Activated naive CD4-positive, alpha-beta T cell treated with anti-CD3 and anti-CD28 coated beads, Interleukin-2, amount 10 ng/mL, durations not matched to agents 7 days and 5 days (primary cell): ENCODE measurements at regions of chr13 and their contacts with region 1.

Region 1: DNA sequence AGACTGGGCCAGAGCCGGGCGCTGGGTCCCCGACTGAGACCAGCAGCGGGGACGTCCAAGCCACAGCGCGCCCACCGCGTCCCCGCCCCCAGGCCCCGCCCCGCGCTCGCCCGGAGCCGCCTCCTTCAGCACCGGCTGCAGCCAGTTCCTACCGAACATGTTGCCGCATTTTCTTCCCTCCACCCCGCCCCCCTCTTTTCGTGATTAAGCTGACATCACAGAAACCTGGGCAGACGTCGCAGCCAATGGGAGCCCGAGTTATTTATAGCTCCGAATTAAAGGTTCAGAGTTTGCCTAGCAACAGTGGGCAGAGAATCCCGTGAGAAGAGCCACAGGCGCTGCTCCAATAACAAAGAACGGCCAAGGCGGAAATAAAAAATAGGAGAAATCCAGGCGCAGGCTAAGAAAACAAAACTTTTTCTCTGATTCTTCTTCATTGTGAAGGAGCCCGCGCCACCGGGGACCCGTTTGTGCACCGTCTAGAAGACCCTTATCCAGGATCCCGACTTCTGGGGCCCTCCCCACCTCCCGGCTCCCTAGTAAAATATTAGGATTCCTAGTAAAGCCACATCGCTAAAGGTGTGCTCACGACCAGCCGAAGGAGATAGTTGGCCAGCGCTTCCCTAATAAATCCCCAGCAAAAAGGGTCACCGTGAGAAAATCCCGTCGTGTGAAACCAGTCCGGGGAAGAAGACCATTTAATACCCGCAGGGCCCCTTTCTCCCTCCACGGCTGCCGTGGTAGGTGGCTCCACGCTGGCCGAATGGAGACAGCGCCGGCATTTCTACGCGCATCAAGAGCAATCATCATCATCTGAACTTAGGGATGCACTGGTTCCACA is 61.7 kb downstream of the SERP2 start:
- DNase-seq: peak; percentile 93
- H3K4me3 Mint-ChIP-seq: peak overlapping the region; percentile 78
- H3K27ac Mint-ChIP-seq: no peak overlapping the region
- H3K4me1 Mint-ChIP-seq: peaks cover 21% of the 10 kb centered on the region
- H3K27me3 Mint-ChIP-seq: peaks cover 42% of the 10 kb centered on the region

Region 2: GRCh38 chr13:43905435-43906031 is 529.8 kb before region 1 on chr13:
- CTCF ChIA-PET with region 1: interaction called, 17 read pairs
- DNase-seq: peak; percentile 29
- H3K4me3 Mint-ChIP-seq: no peak overlapping the region
- H3K27ac Mint-ChIP-seq: no peak overlapping the region
- H3K4me1 Mint-ChIP-seq: no peaks in the 10 kb centered on the region
- H3K27me3 Mint-ChIP-seq: peaks cover 17% of the 10 kb centered on the region

Region 3: DNA sequence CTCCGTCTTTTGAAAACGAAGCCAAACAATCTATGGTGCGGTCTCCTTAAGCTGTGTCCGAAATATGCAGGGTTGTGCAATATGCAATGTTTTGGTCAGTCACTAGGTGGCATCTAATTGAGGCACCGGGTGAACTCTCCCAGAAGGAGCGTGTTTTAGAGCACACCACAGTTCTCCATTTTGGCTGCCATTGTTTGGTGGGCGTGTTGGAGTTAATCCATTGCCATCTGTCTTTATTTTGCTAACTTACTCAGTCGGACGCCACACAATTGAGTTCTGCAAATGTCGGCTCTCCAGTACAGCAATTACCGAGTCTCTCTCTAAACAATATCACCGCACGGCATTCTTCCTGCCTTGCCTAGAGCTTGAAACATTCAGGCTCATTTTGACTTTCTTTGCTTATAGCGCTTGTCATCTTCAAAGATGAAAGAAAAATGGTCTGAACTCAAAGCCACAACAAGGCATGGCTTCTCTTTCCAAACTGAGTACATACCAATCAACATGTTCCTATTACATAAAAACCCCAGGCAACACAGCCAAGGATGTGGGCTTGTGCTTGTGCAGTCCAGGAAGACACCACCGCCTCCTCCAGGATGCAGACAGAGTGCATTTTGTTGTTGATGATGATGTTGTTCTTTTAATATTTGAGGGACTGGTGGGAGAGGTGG is 243.7 kb before region 1 on chr13:
- CTCF ChIA-PET with region 1: interaction called, 18 read pairs
- DNase-seq: peak; percentile 54
- H3K4me3 Mint-ChIP-seq: no peak overlapping the region
- H3K27ac Mint-ChIP-seq: peak overlapping the region; percentile 66
- H3K4me1 Mint-ChIP-seq: peaks cover 29% of the 10 kb centered on the region
- H3K27me3 Mint-ChIP-seq: peaks cover 35% of the 10 kb centered on the region

Region 4: DNA sequence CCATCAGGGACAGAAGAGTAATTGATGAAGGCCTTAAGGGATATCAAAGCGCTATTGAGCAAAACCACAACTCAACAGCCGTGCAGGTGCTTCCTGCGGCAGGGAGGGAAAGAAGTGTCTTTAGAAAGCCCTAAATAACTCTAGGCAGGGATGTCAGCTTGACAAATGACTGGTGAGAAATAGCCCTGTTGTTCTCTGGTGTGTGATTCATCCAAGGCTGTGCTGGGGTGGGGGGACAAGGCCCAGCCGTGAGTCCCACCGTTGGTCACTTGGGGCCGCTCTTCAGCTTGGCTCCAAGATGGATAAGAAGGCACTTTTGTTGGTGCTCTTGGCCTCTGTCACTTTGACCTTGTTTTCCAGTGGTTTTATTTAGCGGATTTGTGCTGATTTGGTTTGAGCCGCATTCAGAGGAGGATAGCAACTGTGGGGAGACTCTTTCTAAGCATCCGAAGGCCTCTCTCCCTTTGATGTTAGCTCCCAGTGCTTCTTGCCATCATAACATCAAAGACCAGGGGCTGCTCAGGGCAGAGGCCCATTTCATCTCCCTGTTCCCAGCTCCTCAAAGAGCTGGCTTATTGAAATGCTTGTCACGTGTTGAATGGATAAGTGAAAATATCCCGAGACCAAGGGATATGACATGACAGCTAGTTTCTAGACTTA is 192.0 kb before region 1 on chr13:
- CTCF ChIA-PET with region 1: interaction called, 11 read pairs
- DNase-seq: peak; percentile 21
- H3K4me3 Mint-ChIP-seq: no peak overlapping the region
- H3K27ac Mint-ChIP-seq: peak overlapping the region; percentile 31
- H3K4me1 Mint-ChIP-seq: peaks cover 13% of the 10 kb centered on the region
- H3K27me3 Mint-ChIP-seq: peaks cover 10% of the 10 kb centered on the region

Region 5: GRCh38 chr13:44529426-44529825 is 94.1 kb after region 1 on chr13:
- CTCF ChIA-PET with region 1: no interaction called
- DNase-seq: no peak
- H3K4me3 Mint-ChIP-seq: no peak overlapping the region
- H3K27ac Mint-ChIP-seq: no peak overlapping the region
- H3K4me1 Mint-ChIP-seq: no peaks in the 10 kb centered on the region
- H3K27me3 Mint-ChIP-seq: no peaks in the 10 kb centered on the region